Activated T-helper 1 cell treated with anti-CD3 and anti-CD28 coated beads, Interleukin-12 subunit alpha, Interleukin-12 subunit beta, Interleukin-2, Interleukin-4 antibody, amounts not matched to agents 30 ng/mL and 10 ng/mL and 1 ng/mL, durations not matched to agents 14 hours and 24 hours and 36 hours (primary cell): ENCODE measurements at regions of chr12 and their contacts with region 1.

Region 1: GRCh38 chr12:124466216-124467128 is 100.9 kb downstream of the NCOR2 start:
- DNase-seq: peak; percentile 81
- H3K4me3 Mint-ChIP-seq: peak overlapping the region; percentile 49
- H3K27ac Mint-ChIP-seq: peak overlapping the region; percentile 68
- H3K4me1 Mint-ChIP-seq: peaks cover 20% of the 10 kb centered on the region
- H3K27me3 Mint-ChIP-seq: no peaks in the 10 kb centered on the region

Region 2: DNA sequence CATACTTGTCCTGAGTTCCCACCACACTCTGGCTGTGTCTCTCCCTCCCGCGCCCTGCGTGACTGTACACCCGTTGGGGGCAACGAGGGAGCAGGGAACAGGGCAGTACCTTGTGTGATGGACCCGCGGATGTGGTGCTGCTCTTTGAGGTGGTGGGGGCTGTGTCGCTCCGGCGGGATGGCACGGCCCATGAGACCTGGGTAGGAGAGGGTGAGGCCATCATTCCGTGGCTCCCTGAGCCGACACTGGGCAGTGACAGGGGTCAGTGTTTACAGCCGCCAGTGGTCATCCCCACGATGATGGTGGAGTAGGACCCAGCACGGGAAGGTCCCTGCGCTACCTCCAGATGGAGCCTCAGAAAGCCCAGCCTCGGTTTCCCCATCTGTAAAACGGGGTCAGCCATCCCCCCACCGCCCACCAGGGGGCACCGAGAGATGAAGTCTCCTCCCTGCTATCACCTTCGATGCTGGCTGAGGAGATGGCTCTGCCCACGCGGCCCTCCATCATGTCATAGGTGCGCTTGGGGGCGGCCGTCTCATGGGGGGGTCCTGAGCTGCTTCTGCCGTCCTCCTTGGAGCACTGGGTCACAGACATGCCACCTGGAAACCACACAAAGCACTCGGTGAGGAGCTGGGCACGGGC is 118.6 kb before region 1 on chr12:
- intact Hi-C with region 1: loop called (anchors 2 kb)
- DNase-seq: no peak
- H3K4me3 Mint-ChIP-seq: no peak overlapping the region
- H3K27ac Mint-ChIP-seq: no peak overlapping the region
- H3K4me1 Mint-ChIP-seq: no peaks in the 10 kb centered on the region
- H3K27me3 Mint-ChIP-seq: no peaks in the 10 kb centered on the region

Region 3: DNA sequence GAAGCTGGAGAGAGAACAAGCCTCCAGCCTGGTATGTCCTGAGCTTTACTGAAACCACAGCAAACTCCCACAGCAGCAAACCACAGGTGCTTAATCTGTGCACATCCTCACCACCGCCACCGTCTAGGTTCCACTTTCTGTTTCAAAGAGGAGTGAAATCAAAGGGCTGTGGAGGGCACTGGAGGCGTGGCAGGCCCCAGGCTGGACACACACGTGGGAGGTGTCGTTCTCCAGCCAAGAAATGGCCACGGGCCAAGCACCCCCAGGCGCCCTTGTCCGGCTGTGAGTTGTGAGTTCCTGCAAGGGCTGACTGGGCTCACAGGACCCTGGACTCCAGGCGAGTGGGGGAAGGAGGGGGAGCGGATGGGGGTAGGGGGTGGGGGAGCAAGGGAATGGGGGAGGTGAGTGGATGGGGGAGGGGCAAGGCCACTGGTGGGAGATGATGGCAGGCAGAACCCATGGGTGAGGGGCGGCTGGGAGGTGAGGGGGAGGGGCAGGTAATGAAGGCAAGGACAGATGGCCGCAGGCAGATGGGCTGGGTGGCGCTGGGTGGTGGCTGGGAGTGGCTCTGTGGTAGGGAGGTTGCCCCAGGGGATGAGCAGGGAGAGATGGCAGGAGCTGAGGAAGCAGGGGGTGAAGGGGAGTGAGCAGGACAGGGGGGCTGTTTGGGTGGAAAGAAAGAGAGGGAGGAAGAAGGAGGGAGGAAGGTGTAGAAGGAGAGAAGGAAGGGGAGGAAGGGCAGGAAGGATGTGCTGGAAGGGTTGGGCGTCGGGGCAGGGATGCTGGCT is 14.2 kb after region 1 on chr12:
- intact Hi-C with region 1: loop called (anchors 1 kb)
- DNase-seq: peak; percentile 62
- H3K4me3 Mint-ChIP-seq: no peak overlapping the region
- H3K27ac Mint-ChIP-seq: peak overlapping the region; percentile 52
- H3K4me1 Mint-ChIP-seq: peaks cover 36% of the 10 kb centered on the region
- H3K27me3 Mint-ChIP-seq: peaks cover 3% of the 10 kb centered on the region

Region 4: GRCh38 chr12:125220404-125220803 is 753.9 kb after region 1 on chr12:
- intact Hi-C with region 1: no loop called
- DNase-seq: no peak
- H3K4me3 Mint-ChIP-seq: no peak overlapping the region
- H3K27ac Mint-ChIP-seq: no peak overlapping the region
- H3K4me1 Mint-ChIP-seq: no peaks in the 10 kb centered on the region
- H3K27me3 Mint-ChIP-seq: peaks cover 7% of the 10 kb centered on the region